ENCODE measurements at regions of chr1 and their contacts with region 1.

Region 1: DNA sequence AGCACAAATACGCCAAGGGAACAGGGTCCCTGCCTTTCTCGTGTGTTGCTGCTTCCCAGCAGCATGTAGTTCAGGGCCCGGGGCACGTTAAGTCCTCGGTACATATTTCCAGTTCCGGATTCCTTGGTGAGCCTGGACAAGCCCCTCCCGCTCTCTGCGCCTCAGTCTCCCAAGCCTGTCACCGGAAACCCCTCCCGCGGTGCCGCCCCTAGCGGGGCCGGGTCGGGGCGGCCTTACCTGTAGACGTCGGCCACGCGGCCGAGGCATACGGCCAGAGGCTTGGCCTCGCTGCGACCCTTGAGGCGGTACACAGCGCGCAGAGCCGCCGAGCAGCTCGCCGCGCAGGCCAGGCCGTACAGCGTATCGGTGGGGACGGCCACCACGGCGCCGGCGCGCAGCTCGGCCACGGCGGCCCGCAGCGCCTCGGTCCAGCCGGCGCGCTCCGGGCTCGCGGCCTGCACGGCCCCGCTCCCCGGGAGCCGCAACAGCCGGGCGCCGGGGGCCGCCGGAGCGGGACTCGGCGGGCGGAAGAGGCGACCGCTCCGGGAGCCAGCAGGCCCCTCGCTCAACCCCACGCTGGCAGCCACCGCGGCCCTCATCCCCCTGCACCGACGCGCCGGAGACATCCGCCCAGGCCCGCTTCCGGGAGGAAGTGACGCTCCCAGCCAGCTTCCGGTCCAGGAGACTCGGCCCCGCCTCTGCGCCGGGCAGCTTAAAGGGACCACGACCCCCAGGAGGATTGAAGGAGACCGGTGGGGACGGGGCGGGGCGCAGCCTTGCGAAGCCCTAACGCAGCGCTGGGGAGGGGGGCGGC is at the starts of genes C1orf122 and YRDC:
- DNase-seq: peak; percentile 91
- H3K4me3 Mint-ChIP-seq: peak within 1 kb of the TSS; percentile 95
- H3K27ac Mint-ChIP-seq: peak within 1 kb of the TSS; percentile 97
- H3K4me1 Mint-ChIP-seq: peaks cover 53% of the 10 kb centered on the region
- H3K27me3 Mint-ChIP-seq: no peaks in the 10 kb centered on the region
- total RNA-seq, gene C1orf122: 30.7 and 33.3 TPM in 2 replicates
- total RNA-seq, gene YRDC: 73.9 and 77.6 TPM in 2 replicates

Region 2: DNA sequence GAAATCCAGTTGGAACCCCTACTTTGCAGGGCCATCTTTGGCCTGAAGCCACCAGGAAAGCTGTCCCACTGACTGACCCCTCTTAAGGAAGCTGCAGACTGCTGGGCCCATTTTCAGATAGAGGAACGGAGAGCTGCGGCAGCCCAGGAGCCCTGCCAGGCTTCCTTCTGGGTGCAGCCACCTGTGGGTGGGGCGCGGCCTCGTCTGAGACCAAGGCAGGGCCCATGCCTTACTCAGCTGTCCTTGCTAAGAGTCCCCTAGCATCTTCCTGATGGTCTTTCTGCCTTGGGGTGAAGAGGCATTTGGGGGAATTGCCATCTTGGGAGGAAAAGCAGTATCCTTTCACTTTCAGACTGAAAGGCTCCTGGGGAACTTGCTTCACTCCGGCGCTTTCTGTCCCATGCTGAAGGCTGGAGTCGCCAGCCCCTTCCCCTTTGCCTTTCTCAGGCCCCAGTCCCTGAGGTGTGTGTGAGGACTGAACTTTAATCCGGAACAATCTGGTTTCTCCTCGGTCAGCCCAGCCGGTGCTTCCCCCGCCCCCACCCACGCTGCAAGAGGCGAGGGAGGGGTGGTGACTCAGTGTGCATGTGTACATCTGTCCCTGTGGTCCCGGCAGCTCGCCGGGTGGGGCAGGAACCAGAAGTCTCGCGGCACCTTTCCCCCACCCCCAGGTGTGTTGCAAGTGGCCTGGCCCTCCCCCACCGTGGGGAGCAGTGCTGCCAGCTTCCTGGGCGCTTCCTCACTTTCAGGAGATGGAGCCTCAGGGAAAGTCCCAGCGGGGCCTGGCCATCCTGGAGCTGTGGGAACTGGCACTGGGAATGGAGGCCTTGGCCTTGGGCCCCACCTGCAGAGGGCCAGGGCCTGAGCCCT is 328.3 kb before region 1 on chr1:
- intact Hi-C with region 1: loop called (anchors 1 kb)
- DNase-seq: peak; percentile 84
- H3K4me3 Mint-ChIP-seq: peak overlapping the region; percentile 100
- H3K27ac Mint-ChIP-seq: peak overlapping the region; percentile 97
- H3K4me1 Mint-ChIP-seq: peaks cover 42% of the 10 kb centered on the region
- H3K27me3 Mint-ChIP-seq: peaks cover 2% of the 10 kb centered on the region

Region 3: DNA sequence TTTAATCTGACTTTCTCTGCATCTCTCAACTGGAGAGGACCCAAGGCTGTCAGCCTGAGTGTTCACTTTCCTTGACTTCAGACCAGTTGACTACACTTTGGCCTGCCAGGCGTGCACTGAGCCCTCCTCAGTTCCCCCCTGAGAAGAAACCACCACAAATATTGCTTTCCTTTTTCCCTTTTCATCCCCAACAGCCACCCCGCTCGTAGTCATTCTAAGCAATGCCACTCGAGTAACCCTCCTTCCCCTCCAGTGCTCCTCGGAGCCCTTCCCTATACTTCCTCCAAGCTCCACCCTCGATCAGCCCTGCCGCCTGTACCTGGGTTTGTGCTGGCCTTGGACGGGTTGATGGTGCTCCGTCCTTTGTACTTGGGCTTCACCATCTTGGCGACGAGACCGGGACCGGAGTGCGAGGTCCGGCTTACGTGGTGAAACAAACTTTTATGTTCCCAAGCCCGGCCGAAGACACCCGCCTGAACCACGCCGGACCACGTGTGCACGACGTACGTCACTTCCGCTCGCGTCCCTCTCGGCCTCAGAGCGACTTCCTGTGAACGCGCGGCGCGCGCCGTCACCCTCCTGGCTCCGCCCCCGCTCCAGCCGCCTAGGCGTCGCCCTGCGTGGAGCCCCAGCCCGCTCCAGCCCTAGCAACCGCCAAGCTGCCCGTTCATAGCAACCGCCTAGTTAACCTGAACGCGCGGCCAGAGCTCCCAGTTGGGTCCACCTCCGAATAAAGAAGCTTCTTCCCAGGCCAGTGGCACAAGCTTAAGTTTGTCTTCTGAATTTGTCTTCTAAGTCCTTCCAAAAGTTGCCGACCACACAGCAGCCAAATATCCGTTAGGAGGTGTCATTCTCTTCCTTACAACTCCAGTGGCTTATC is 212.1 kb before region 1 on chr1 and contains the start of gene GNL2:
- intact Hi-C with region 1: loop called (anchors 2 kb)
- DNase-seq: peak; percentile 97
- H3K4me3 Mint-ChIP-seq: peak within 1 kb of the TSS; percentile 96
- H3K27ac Mint-ChIP-seq: peak within 1 kb of the TSS; percentile 90
- H3K4me1 Mint-ChIP-seq: peaks cover 20% of the 10 kb centered on the region
- H3K27me3 Mint-ChIP-seq: peaks cover 4% of the 10 kb centered on the region
- total RNA-seq, gene GNL2: 108 and 113 TPM in 2 replicates

Region 4: GRCh38 chr1:37793773-37794371 is 13.9 kb before region 1 on chr1 and contains the start of gene MANEAL:
- intact Hi-C with region 1: loop called (anchors 2 kb)
- DNase-seq: no peak
- H3K4me3 Mint-ChIP-seq: peak within 1 kb of the TSS; percentile 80
- H3K27ac Mint-ChIP-seq: no peak within 1 kb of the TSS
- H3K4me1 Mint-ChIP-seq: peaks cover 14% of the 10 kb centered on the region
- H3K27me3 Mint-ChIP-seq: peaks cover 36% of the 10 kb centered on the region
- total RNA-seq, gene MANEAL: 3.6 and 4.0 TPM in 2 replicates

Region 5: GRCh38 chr1:37859507-37860345 is 52.0 kb after region 1 on chr1 and contains the start of gene MTF1:
- intact Hi-C with region 1: loop called (anchors 1 kb)
- DNase-seq: peak; percentile 96
- H3K4me3 Mint-ChIP-seq: peak within 1 kb of the TSS; percentile 95
- H3K27ac Mint-ChIP-seq: peak within 1 kb of the TSS; percentile 99
- H3K4me1 Mint-ChIP-seq: peaks cover 31% of the 10 kb centered on the region
- H3K27me3 Mint-ChIP-seq: no peaks in the 10 kb centered on the region
- total RNA-seq, gene MTF1: 31.7 and 35.3 TPM in 2 replicates

Region 6: GRCh38 chr1:37989361-37989930 is 181.7 kb after region 1 on chr1:
- intact Hi-C with region 1: loop called (anchors 1 kb)
- DNase-seq: peak; percentile 41
- H3K4me3 Mint-ChIP-seq: peak overlapping the region; percentile 96
- H3K27ac Mint-ChIP-seq: peak overlapping the region; percentile 94
- H3K4me1 Mint-ChIP-seq: peaks cover 17% of the 10 kb centered on the region
- H3K27me3 Mint-ChIP-seq: no peaks in the 10 kb centered on the region

Region 7: GRCh38 chr1:38297842-38298241 is 490.1 kb after region 1 on chr1:
- intact Hi-C with region 1: no loop called
- DNase-seq: no peak
- H3K4me3 Mint-ChIP-seq: no peak overlapping the region
- H3K27ac Mint-ChIP-seq: no peak overlapping the region
- H3K4me1 Mint-ChIP-seq: no peaks in the 10 kb centered on the region
- H3K27me3 Mint-ChIP-seq: peaks cover 7% of the 10 kb centered on the region

Measured in activated T-helper 1 cell treated with anti-CD3 and anti-CD28 coated beads, Interleukin-12 subunit alpha, Interleukin-12 subunit beta, Interleukin-2, Interleukin-4 antibody, amounts not matched to agents 30 ng/mL and 10 ng/mL and 1 ng/mL, durations not matched to agents 14 hours and 24 hours and 36 hours (primary cell).